Activated naive CD4-positive, alpha-beta T cell treated with anti-CD3 and anti-CD28 coated beads, Interleukin-2, amount 10 ng/mL, durations not matched to agents 7 days and 5 days (primary cell): ENCODE measurements at regions of chr4 and their contacts with region 1.

Region 1: DNA sequence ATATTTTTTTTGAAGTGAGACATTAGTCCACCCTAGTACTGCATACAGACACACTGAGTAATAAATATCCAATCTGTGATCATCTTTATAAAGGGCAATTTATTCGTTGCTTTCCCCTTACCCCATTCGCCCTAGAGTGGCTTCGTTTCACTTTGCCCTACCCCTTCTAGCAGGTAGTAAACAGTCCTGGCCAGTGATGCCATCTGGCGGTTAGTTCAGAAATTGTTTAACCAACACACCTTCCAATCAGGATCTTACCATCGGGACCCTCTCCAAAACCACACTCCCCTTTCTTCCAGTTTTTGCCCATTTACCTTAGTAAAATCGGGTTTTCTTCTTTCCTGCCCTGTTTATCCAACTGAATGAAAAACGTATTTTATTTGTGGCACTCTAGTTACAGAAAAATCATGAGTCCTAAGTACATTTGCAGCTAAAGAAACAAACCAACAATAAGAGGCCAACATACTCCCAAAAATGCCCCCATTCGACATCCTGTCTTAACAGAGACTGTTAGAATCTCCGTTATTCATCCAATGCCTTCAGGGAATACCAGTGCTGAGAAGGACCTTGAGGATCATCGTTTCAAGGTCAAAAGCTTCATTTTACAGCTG is 2.2 kb downstream of the PPA2 start:
- DNase-seq: peak; percentile 84
- H3K4me3 Mint-ChIP-seq: peak overlapping the region; percentile 36
- H3K27ac Mint-ChIP-seq: peak overlapping the region; percentile 53
- H3K4me1 Mint-ChIP-seq: peaks cover 31% of the 10 kb centered on the region
- H3K27me3 Mint-ChIP-seq: no peaks in the 10 kb centered on the region

Region 2: GRCh38 chr4:105140684-105141490 is 330.8 kb before region 1 on chr4:
- CTCF ChIA-PET with region 1: interaction called, 26 read pairs
- DNase-seq: peak; percentile 60
- H3K4me3 Mint-ChIP-seq: no peak overlapping the region
- H3K27ac Mint-ChIP-seq: no peak overlapping the region
- H3K4me1 Mint-ChIP-seq: peaks cover 19% of the 10 kb centered on the region
- H3K27me3 Mint-ChIP-seq: peaks cover 6% of the 10 kb centered on the region